GM12878 (cell line): ENCODE measurements at regions of chrX and their contacts with region 1.

Region 1: GRCh38 chrX:30570505-30570904 is 7.1 kb downstream of the TASL start:
- DNase-seq: no peak
- ATAC-seq: peak; percentile 3; the same call in 1 of the 3 replicates
- H3K4me3 ChIP-seq: no peak overlapping the region
- H3K27ac ChIP-seq: no peak overlapping the region
- H3K4me1 ChIP-seq: peaks cover 19% of the 10 kb centered on the region
- H3K27me3 ChIP-seq: no peaks in the 10 kb centered on the region
- CTCF ChIP-seq: peak; percentile 33 to 57 (median 44); a peak in 5 of 6 replicates
- EP300 ChIP-seq: no peak
- POLR2A ChIP-seq: no peak
- RAD21 ChIP-seq: peak; percentile 65

Region 2: DNA sequence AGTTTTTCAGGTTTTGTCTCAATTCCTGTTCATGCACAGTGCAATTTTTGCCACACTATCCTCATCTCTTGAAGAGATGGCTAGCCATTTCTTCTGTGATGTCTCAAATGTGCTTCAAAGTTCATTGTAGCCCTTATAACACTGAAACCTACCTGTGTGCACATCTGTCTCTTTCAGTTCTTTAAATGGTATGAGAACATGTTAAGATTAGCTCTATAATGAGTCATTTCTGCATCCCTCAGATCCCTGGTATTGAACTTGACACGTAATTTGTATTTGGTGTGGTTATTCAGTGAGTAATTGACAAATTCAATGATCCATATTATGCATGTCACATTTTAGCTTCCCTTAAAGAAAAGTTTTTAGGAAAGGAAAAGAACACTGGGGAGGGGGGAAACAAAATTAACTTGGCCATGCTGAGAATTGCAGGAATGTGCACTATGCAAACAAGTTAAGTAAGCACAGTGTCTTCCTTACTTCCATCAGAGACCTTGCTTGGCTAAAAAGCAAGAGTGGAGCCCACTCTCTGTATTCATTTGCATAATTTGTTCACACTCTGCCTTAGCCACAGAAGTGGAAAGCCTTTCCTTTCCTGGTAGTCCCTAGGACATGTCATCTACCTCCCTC is 1014.9 kb before region 1 on chrX:
- CTCF ChIA-PET with region 1: no interaction called
- POLR2A ChIA-PET with region 1: no interaction called
- RAD21 ChIA-PET with region 1: no interaction called
- SMC1A ChIA-PET with region 1: no interaction called
- in situ Hi-C with region 1: loop called (anchors 10 kb)
- intact Hi-C with region 1: no loop called
- DNase-seq: peak; percentile 93
- ATAC-seq: peak; percentile 95
- H3K4me3 ChIP-seq: peak overlapping the region; percentile 67; the same call in 1 of the 2 replicates
- H3K27ac ChIP-seq: peak overlapping the region; percentile 90
- H3K4me1 ChIP-seq: peaks cover 6% of the 10 kb centered on the region; the same call in 1 of the 2 replicates
- H3K27me3 ChIP-seq: no peaks in the 10 kb centered on the region
- CTCF ChIP-seq: no peak
- EP300 ChIP-seq: peak; percentile 98 to 99
- POLR2A ChIP-seq: peak; percentile 54; the same call in 1 of the 2 replicates
- RAD21 ChIP-seq: 0 out of 2 replicates have a peak, but pooled peaks have one; percentile 31

Region 3: GRCh38 chrX:29965634-29966033 is 604.9 kb before region 1 on chrX:
- CTCF ChIA-PET with region 1: no interaction called
- POLR2A ChIA-PET with region 1: no interaction called
- RAD21 ChIA-PET with region 1: no interaction called
- SMC1A ChIA-PET with region 1: no interaction called
- in situ Hi-C with region 1: no loop called
- intact Hi-C with region 1: no loop called
- DNase-seq: no peak
- ATAC-seq: no peak
- H3K4me3 ChIP-seq: no peak overlapping the region
- H3K27ac ChIP-seq: no peak overlapping the region
- H3K4me1 ChIP-seq: no peaks in the 10 kb centered on the region
- H3K27me3 ChIP-seq: no peaks in the 10 kb centered on the region
- CTCF ChIP-seq: no peak
- EP300 ChIP-seq: no peak
- POLR2A ChIP-seq: no peak
- RAD21 ChIP-seq: no peak

Region 4: DNA sequence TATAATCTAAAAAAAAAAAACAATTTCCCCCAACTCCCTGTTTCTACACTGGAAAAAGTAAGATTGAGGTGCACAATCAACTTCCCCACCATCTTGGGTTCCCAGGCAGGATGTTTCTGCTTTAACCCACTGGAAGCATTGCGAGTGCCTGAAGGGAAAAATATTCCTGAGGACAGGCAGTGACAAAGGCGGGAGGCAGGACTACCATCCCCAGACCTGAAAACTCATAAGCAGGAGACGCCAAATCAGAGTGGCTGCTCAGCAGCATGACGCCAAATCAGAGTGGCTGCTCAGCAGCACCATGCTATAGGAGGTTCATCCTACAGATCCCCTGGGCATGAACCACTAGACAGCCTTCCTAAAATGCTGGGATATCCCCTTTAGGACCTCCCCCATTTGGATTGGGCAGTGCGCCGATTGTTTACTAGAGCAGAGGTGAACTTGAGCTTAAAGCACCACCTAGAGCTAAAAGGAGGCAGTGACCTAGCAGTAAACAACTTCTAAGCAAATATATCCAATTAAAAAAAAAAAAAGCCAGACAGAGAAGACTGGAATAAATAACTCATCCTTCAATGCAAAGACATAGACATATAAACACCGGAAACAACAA is 47.8 kb after region 1 on chrX:
- CTCF ChIA-PET with region 1: interaction called, 15 read pairs
- POLR2A ChIA-PET with region 1: no interaction called
- RAD21 ChIA-PET with region 1: interaction called, 5 read pairs
- SMC1A ChIA-PET with region 1: interaction called, 6 read pairs
- in situ Hi-C with region 1: no loop called
- intact Hi-C with region 1: loop called (anchors 1 kb)
- DNase-seq: no peak
- ATAC-seq: peak; percentile 79
- H3K4me3 ChIP-seq: no peak overlapping the region
- H3K27ac ChIP-seq: no peak overlapping the region
- H3K4me1 ChIP-seq: no peaks in the 10 kb centered on the region
- H3K27me3 ChIP-seq: no peaks in the 10 kb centered on the region
- CTCF ChIP-seq: peak; percentile 23 to 30 (median 27); a peak in 3 of 6 replicates
- EP300 ChIP-seq: no peak
- POLR2A ChIP-seq: no peak
- RAD21 ChIP-seq: peak; percentile 44

Region 5: GRCh38 chrX:30713061-30713525 is 142.6 kb after region 1 on chrX:
- CTCF ChIA-PET with region 1: interaction called, 6 read pairs
- POLR2A ChIA-PET with region 1: interaction called, 6 read pairs
- RAD21 ChIA-PET with region 1: interaction called, 4 read pairs
- SMC1A ChIA-PET with region 1: interaction called, 11 read pairs
- in situ Hi-C with region 1: loop called (anchors 5 kb)
- intact Hi-C with region 1: loop called (anchors 2 kb)
- DNase-seq: peak; percentile 85
- ATAC-seq: peak; percentile 94
- H3K4me3 ChIP-seq: no peak overlapping the region
- H3K27ac ChIP-seq: peak overlapping the region; percentile 51
- H3K4me1 ChIP-seq: peaks cover 13% of the 10 kb centered on the region
- H3K27me3 ChIP-seq: no peaks in the 10 kb centered on the region
- CTCF ChIP-seq: peak; percentile 27 to 40 (median 31); a peak in 5 of 6 replicates
- EP300 ChIP-seq: peak; percentile 95 to 97
- POLR2A ChIP-seq: no peak
- RAD21 ChIP-seq: peak; percentile 46; the same call in 1 of the 2 replicates

Region 6: DNA sequence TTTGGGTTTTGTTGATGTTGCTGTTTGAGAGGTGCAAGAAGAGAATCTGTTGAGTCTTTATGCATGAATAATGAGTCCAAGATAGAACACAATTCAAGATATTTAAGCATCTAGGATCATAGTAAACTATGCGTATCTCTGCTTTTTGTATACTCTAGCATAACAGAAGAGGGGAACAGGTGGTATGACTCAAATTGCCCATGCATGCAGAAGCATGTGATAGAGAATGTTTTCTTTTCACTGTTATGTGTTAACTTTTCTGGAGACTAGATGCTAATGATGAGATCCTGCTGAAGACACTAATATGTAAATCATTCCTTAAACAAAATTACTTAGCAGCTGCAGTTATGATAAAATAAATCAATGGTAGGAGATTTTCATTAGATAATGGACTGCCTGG is 666.7 kb after region 1 on chrX:
- CTCF ChIA-PET with region 1: no interaction called
- POLR2A ChIA-PET with region 1: no interaction called
- RAD21 ChIA-PET with region 1: no interaction called
- SMC1A ChIA-PET with region 1: no interaction called
- in situ Hi-C with region 1: no loop called
- intact Hi-C with region 1: loop called (anchors 10 kb)
- DNase-seq: no peak
- ATAC-seq: peak; percentile 76
- H3K4me3 ChIP-seq: no peak overlapping the region
- H3K27ac ChIP-seq: no peak overlapping the region
- H3K4me1 ChIP-seq: peaks cover 11% of the 10 kb centered on the region
- H3K27me3 ChIP-seq: no peaks in the 10 kb centered on the region; a peak in 1 of 4 replicates
- CTCF ChIP-seq: no peak
- EP300 ChIP-seq: 0 out of 4 replicates have a peak, but pooled peaks of 1 of the 2 experiments have one; percentile 26
- POLR2A ChIP-seq: no peak
- RAD21 ChIP-seq: no peak